ENCODE measurements at regions of chr2 and their contacts with region 1.

Region 1: DNA sequence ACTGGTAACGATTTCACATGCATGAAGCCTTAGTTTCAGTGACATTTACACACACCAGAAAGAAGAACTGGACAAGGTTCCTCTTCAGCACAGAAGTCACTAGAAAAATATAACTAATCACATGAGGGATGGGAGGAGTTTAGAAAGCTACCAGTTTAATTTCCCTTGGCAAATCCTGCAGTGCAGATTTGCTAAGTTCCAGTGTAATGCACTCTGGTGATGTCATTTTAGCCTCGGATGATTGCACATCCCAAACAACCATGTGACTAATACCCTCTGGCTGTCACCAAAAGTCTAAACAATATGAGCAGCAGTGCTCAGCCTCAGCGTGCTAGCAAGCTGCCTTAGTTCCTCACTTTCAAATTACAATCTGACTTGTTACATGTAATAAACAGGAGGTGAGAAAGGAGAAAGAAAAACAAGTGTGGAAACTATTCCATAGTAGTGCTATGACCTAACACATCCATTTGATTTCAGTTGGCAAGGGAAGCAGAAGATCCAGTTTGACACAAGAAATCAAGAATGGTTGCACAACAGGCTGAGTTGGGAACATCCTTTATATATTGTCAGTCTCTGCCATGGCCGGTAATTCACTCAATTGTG is 35.3 kb upstream of the PPP1CB start:
- DNase-seq: peak; percentile 95
- H3K4me3 ChIP-seq: peak overlapping the region in 1 of 3 experiments; percentile 0
- H3K27ac ChIP-seq: peak overlapping the region; percentile 64
- H3K4me1 ChIP-seq: peaks cover 31% of the 10 kb centered on the region
- H3K27me3 ChIP-seq: no peaks in the 10 kb centered on the region
- CTCF ChIP-seq: no peak

Region 2: GRCh38 chr2:28577791-28578680 is 138.3 kb before region 1 on chr2:
- CTCF ChIA-PET with region 1: no interaction called
- dilution Hi-C with region 1: no loop called
- in situ Hi-C with region 1: no loop called
- intact Hi-C with region 1: no loop called
- DNase-seq: no peak
- H3K4me3 ChIP-seq: no peak overlapping the region
- H3K27ac ChIP-seq: no peak overlapping the region
- H3K4me1 ChIP-seq: peaks cover 11% of the 10 kb centered on the region
- H3K27me3 ChIP-seq: no peaks in the 10 kb centered on the region
- CTCF ChIP-seq: no peak

Region 3: DNA sequence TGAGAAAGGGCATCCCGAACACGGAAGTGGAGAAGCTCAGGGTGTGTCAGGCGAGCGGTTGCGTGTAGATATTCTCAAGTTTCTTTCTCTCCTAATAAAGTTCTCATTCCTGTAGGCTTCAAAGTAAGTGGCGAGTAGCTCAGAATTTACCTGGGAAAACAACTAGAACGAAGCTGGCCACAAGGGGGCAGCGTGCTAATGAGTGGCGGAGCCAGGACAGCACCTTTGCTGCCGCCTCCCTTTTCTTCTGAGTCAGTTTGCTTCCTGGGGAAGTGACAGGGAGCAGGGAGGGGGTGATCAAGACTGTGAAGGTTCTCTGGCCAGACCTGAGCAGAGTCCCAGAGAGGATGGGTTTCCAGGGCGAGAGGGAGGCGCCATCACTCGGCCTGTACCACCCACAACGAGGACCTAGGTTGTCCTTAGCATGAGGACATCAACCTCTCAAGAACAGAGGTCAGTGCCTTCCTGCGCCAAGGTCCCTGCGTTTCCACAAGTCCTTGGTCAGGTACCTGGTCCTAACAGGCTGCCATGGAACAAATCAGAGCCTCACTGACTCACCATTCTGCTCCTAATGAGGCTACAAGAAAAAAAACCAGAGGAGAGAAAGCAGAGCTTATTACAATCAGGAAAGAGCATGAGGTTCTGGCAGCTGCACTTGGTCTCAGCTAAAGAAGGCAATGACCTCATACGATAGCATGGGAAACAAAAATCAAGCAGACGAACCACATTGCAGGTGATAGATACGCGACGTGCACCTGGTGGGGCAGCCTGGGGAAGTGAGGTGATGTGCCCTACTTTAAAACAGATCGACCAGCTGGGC is 121.9 kb before region 1 on chr2:
- CTCF ChIA-PET with region 1: interaction called, 3 read pairs
- dilution Hi-C with region 1: no loop called
- in situ Hi-C with region 1: no loop called
- intact Hi-C with region 1: loop called (anchors 1 kb)
- DNase-seq: peak; percentile 94
- H3K4me3 ChIP-seq: peak overlapping the region in 1 of 3 experiments; percentile 2
- H3K27ac ChIP-seq: peak overlapping the region; percentile 63
- H3K4me1 ChIP-seq: peaks cover 38% of the 10 kb centered on the region
- H3K27me3 ChIP-seq: no peaks in the 10 kb centered on the region
- CTCF ChIP-seq: peak; percentile 79 to 83

Region 4: DNA sequence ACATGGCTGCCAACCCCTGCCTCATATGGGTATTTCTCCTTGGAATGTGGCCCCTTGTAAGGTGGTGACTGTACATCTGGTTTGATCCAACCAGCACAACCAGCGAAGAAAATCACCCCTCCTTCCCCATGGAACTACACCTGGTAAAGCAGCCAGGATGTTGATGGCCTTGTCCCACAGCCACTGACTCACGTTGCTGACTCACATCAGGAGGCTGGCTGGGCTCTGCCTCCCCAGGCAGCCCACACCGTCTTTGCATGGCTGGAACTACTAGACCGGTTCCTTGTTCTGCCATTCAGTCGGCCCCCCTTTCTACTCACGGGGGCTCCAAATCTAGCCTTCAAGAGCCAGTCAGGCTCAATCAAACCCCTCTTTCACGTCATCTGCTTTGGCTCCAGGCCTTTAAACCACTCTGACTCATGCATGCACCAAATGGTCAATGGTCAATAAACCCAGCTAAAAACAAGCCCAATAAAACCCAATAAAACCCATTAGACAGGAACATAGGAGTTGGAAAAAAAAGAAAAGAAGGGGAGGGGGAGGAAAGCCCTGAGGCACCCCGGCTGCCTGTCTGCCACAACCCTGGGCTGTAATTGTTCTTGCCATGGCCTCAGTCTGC is 105.7 kb before region 1 on chr2:
- CTCF ChIA-PET with region 1: interaction called, 3 read pairs
- dilution Hi-C with region 1: loop called (anchors 5 kb)
- in situ Hi-C with region 1: no loop called
- intact Hi-C with region 1: loop called (anchors 1 kb)
- DNase-seq: peak; percentile 98
- H3K4me3 ChIP-seq: no peak overlapping the region
- H3K27ac ChIP-seq: peak overlapping the region; percentile 71
- H3K4me1 ChIP-seq: peaks cover 52% of the 10 kb centered on the region
- H3K27me3 ChIP-seq: no peaks in the 10 kb centered on the region
- CTCF ChIP-seq: no peak

Region 5: GRCh38 chr2:28643911-28644334 is 72.4 kb before region 1 on chr2:
- CTCF ChIA-PET with region 1: no interaction called
- dilution Hi-C with region 1: no loop called
- in situ Hi-C with region 1: no loop called
- intact Hi-C with region 1: loop called (anchors 1 kb)
- DNase-seq: peak; percentile 93
- H3K4me3 ChIP-seq: no peak overlapping the region
- H3K27ac ChIP-seq: peak overlapping the region; percentile 96
- H3K4me1 ChIP-seq: peaks cover 40% of the 10 kb centered on the region
- H3K27me3 ChIP-seq: no peaks in the 10 kb centered on the region
- CTCF ChIP-seq: no peak

Region 6: DNA sequence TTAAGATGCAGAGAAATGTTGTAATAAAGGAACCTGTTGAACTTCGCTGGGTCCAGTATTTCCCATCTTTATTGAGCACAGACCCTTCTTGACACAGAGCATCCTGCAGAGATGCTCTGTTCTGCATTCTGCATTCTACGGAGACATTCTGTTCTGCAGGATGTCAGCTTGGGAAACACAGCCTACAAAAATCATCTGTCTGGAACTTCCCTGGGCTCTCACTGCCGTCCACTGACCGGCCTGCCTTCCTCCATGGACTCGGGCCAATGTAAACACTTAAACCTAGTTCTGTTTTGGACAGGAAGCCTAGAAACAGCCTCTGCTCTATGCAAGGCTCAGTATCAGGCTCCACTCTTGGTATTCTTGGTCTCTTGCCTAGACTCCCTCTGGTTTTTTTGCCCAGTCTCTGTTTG is 54.8 kb before region 1 on chr2:
- CTCF ChIA-PET with region 1: no interaction called
- dilution Hi-C with region 1: loop called (anchors 5 kb)
- in situ Hi-C with region 1: no loop called
- intact Hi-C with region 1: loop called (anchors 5 kb)
- DNase-seq: peak; percentile 78
- H3K4me3 ChIP-seq: no peak overlapping the region
- H3K27ac ChIP-seq: no peak overlapping the region
- H3K4me1 ChIP-seq: peaks cover 42% of the 10 kb centered on the region
- H3K27me3 ChIP-seq: no peaks in the 10 kb centered on the region
- CTCF ChIP-seq: no peak

Region 7: DNA sequence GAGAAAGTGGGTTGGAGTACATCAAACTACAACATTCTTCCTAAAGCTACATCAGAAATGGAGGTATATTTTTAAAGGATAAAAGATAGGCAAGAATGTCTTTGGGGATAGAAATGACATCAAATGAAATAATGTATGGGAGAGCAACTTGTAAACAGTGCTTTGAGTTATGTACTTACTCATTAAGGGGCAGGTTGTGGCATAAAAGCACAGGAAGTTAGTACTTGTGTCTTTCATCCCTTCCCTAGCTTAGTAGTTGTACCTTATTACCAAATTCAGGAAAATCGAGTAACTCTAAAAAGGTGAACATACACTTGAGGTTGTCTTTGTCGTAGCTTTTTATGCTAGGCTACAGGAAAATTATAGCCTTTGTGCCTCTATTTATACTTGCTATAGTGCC is 64.1 kb after region 1 on chr2:
- CTCF ChIA-PET with region 1: interaction called, 18 read pairs
- dilution Hi-C with region 1: no loop called
- in situ Hi-C with region 1: no loop called
- intact Hi-C with region 1: no loop called
- DNase-seq: peak; percentile 23
- H3K4me3 ChIP-seq: no peak overlapping the region
- H3K27ac ChIP-seq: no peak overlapping the region
- H3K4me1 ChIP-seq: no peaks in the 10 kb centered on the region
- H3K27me3 ChIP-seq: no peaks in the 10 kb centered on the region
- CTCF ChIP-seq: no peak

Measured in mammary epithelial cell (primary cell).